Calu3 (cell line): ENCODE measurements at regions of chr9 and their contacts with region 1.

Region 1: DNA sequence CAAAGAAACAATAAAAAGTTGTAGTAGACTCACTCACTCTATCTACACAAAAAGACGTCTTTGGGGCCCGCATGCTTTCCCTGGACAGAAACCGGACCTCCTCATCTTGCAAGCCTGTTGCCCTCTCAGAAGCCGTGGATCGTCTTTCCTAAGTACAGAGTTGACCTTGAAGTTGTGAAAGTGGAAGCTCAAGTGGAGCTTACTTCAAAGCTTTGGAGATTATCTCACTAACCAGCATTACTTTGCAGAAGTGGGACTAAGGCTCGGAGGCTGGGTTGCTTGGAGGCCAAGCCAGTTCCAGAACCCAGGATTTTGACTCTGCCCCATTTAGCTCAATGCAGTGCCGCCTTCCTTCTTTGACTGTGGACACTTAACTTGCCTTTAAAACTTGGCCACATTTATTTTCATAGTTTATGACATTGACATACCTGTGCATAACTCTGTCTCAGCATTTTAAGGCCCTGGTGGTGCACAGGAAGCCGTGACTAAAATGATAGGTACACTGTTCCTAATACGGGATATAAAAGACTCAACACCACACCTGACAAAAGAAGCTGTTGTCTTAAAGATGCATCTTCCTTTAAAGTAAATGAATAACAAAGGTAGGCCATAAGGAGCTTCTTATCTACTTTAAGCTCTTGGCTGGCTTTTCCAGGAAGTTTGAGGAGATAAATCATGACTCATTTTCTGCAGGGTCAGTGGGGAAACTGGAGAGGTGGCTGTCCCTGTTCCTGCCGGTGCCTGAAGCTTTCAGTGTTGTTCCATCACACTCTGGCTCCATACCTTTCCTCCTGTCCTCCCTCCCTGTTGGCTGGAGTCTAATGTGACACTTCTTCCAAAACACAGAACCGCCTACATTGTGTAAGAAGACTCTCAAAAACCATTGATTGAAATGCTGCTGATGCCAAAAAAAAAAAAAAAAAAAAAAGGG is 10.7 kb downstream of the SLC25A25 start:
- DNase-seq: peak; percentile 63
- H3K4me3 Mint-ChIP-seq: peak overlapping the region; percentile 48
- H3K27ac Mint-ChIP-seq: peak overlapping the region; percentile 93
- H3K4me1 Mint-ChIP-seq: peaks cover 18% of the 10 kb centered on the region
- H3K27me3 Mint-ChIP-seq: no peaks in the 10 kb centered on the region
- CTCF ChIP-seq: no peak

Region 2: GRCh38 chr9:128027723-128028122 is 51.0 kb before region 1 on chr9:
- CTCF ChIA-PET with region 1: no interaction called
- intact Hi-C with region 1: no loop called
- DNase-seq: no peak
- H3K4me3 Mint-ChIP-seq: no peak overlapping the region
- H3K27ac Mint-ChIP-seq: no peak overlapping the region
- H3K4me1 Mint-ChIP-seq: no peaks in the 10 kb centered on the region
- H3K27me3 Mint-ChIP-seq: no peaks in the 10 kb centered on the region
- CTCF ChIP-seq: no peak

Region 3: DNA sequence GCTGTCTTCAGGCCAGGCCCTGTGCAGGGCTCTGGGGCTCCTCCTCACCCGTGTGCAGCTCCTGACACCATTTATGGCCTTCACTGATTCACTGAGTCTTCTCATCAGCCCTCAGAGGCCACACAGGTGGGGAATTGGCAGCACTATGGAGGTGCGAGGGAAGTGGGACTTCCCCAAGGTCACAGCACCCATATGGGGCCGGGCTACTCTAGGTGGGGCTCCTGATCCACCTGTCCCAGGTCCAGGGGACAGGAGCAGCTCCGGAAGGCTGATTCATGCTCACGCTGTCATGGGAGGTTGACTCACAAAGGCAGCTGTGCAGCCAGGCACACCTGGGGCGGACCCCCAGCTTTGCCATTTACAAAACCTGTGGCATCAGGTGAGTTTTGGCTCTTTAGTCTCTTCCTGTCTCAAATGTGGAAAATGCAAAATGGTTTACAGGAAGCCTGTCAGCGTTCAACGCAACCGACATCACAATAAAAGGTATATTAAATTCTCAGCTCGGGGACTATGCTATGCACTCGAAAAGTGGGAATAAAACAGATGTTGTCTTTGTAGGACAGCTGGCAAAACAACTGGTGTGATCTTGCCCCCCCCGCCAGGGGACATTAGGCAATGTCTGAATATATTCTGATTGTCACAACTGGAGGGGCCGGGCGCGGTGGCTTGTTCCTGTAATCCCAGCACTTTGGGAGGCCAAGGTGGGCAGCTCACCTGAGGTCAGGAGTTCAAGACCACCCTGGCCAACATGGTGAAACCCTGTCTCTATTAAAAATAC is 26.6 kb before region 1 on chr9:
- CTCF ChIA-PET with region 1: interaction called, 13 read pairs
- intact Hi-C with region 1: no loop called
- DNase-seq: peak; percentile 84
- H3K4me3 Mint-ChIP-seq: no peak overlapping the region
- H3K27ac Mint-ChIP-seq: peak overlapping the region; percentile 58
- H3K4me1 Mint-ChIP-seq: peaks cover 27% of the 10 kb centered on the region
- H3K27me3 Mint-ChIP-seq: no peaks in the 10 kb centered on the region
- CTCF ChIP-seq: no peak

Region 4: GRCh38 chr9:128067876-128068613 is 10.7 kb before region 1 on chr9 and contains the start of gene SLC25A25:
- CTCF ChIA-PET with region 1: interaction called, 11 read pairs
- intact Hi-C with region 1: no loop called
- DNase-seq: peak; percentile 99
- H3K4me3 Mint-ChIP-seq: no peak within 1 kb of the TSS
- H3K27ac Mint-ChIP-seq: peak within 1 kb of the TSS; percentile 56
- H3K4me1 Mint-ChIP-seq: peaks cover 14% of the 10 kb centered on the region
- H3K27me3 Mint-ChIP-seq: no peaks in the 10 kb centered on the region
- CTCF ChIP-seq: no peak
- total RNA-seq, gene SLC25A25: 19.5 and 22.1 TPM in 2 replicates